Activated naive CD4-positive, alpha-beta T cell treated with anti-CD3 and anti-CD28 coated beads for 36 hours (primary cell): ENCODE measurements at regions of chr19 and their contacts with region 1.

Region 1: GRCh38 chr19:3984908-3985642 is at the start of gene EEF2:
- DNase-seq: peak; percentile 88
- H3K4me3 Mint-ChIP-seq: peak within 1 kb of the TSS; percentile 91
- H3K27ac Mint-ChIP-seq: peak within 1 kb of the TSS; percentile 94
- H3K4me1 Mint-ChIP-seq: peaks cover 52% of the 10 kb centered on the region
- H3K27me3 Mint-ChIP-seq: no peaks in the 10 kb centered on the region
- total RNA-seq, gene EEF2: 3,747 to 3,914 TPM

Region 2: DNA sequence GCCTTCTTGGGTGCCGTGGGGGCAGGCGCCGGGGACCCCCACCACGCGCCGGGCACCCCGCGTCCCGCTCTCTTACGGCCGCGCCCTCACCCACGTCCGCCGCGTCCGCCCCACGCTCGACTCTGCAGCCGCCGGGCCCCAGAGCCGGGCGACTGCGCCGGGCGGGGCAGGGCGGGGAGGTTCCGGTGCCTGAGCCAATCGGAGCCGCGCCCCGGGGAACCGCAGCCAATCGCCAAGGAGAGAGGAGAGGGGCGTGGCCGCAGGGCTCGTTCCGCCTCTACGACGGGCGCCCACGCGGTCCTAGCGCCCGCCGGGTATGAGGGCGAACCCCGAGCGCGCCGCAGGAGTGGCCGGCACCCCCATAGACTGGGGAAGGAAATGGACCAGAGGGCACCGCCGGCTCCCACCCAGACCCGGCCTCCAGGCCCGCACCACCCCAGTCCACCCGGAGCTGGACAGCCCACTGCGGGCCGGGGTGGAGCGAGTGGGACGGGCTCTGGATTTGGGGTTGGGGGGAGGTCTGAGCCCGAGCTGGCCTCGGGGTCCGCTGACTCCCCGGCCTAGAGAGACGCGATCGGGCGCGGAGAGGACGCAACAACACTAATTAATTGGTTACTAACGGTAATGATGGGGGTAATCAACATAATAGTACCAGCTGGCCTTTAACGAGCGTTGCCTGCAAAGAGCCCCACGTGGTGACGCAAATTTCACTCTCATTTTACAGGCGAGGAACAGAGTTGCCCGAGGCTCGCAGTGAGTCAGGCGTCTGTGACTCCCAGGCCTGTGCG is 427.4 kb before region 1 on chr19 and contains the start of gene MFSD12:
- CTCF ChIA-PET with region 1: no interaction called
- intact Hi-C with region 1: loop called (anchors 5 kb)
- DNase-seq: peak; percentile 94
- H3K4me3 Mint-ChIP-seq: peak within 1 kb of the TSS; percentile 96
- H3K27ac Mint-ChIP-seq: peak within 1 kb of the TSS; percentile 81
- H3K4me1 Mint-ChIP-seq: peaks cover 37% of the 10 kb centered on the region
- H3K27me3 Mint-ChIP-seq: no peaks in the 10 kb centered on the region
- total RNA-seq, gene MFSD12: 31.3 to 34.0 TPM

Region 3: GRCh38 chr19:4007021-4007835 is 22.2 kb after region 1 on chr19 and contains the start of gene PIAS4:
- CTCF ChIA-PET with region 1: interaction called, 18 read pairs
- intact Hi-C with region 1: loop called (anchors 1 kb)
- DNase-seq: peak; percentile 96
- H3K4me3 Mint-ChIP-seq: peak within 1 kb of the TSS; percentile 84
- H3K27ac Mint-ChIP-seq: peak within 1 kb of the TSS; percentile 79
- H3K4me1 Mint-ChIP-seq: peaks cover 31% of the 10 kb centered on the region
- H3K27me3 Mint-ChIP-seq: no peaks in the 10 kb centered on the region
- total RNA-seq, gene PIAS4: 16.1 to 20.1 TPM

Region 4: DNA sequence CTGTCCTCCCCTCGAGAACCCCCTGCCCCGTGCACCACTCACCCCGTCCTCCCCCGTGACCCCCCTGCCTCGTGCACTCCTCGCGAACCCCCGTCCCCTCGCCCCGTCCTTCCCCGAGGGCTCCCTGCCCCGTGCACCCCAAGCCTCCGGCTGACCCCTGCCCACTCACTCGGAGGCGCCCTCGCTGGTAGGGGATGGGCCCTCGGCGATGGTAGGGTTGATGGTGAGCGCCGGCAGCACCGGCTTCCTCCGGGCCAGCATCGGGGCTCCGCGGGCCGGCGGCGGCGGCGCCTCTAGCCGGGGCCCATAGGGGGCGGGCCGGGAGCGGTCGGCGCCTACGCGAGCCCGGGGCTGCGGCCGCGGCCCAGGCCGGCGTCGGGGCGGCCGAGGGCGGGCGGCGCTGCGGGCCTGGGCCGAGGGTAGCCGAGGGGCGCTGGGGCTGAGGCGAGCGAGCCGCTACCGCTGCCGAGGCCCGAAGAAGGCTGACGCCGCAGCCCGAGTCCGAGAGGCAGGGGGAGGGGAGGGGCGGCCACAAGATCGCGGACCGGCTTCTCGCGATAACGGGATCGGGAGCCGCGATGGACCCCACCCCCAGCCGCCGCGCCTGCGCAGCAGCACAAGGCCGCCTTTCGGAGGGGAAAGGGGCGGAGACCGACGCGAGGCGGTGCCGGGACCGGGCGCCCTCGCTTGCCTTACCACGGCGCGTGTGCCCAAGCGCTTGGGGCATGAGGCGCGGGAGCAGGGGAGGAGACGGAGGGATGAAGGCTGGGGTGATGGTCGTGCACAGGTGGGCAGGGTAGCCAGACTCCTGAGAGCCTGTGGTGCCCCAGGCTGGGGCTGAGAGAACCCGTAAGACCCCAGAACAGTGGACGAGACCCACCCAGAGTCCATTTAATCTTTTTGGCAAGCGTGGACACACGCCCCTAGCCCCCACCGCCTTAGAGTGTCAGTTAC is 138.8 kb after region 1 on chr19 and contains the start of gene MAP2K2:
- CTCF ChIA-PET with region 1: no interaction called
- intact Hi-C with region 1: loop called (anchors 5 kb)
- DNase-seq: peak; percentile 96
- H3K4me3 Mint-ChIP-seq: peak within 1 kb of the TSS; percentile 85
- H3K27ac Mint-ChIP-seq: peak within 1 kb of the TSS; percentile 84
- H3K4me1 Mint-ChIP-seq: peaks cover 24% of the 10 kb centered on the region
- H3K27me3 Mint-ChIP-seq: no peaks in the 10 kb centered on the region
- total RNA-seq, gene MAP2K2: 101 to 103 TPM

Region 5: DNA sequence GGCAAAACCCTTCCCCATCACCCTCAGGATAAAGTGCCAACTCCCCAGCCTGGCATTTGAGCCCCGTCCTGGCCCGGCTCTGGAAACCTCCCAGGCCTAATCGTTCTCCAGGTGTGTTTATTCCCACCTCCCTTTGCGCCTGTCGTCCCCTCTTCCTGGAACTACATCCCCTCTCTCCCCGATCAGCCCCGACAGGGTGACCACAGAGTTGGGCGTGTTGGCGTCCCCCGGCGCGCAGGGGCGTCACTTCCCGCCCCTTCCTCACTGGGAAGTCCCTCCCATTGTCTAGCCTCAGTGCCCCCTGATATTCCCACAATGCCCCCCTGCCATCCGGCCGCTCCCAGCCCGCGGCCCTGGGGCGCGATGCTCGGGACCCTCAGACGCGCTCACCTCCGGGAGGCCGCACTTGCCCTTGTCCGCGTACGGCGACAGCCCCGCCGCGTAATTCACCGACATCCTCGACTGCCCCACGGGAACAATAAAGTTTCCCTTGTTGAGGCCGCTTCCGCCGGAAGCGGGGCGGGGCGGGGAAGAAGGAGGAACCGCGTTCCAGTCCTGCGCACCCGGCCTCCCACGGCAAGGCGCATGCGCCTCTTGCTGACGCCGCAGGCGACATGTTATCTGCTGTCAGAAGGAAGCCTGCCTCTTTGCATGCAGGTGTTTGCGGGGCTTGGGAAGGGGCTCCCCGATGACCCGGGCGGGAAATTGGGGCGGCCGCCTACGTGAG is 197.2 kb after region 1 on chr19 and contains the starts of genes ANKRD24 and SIRT6:
- CTCF ChIA-PET with region 1: no interaction called
- intact Hi-C with region 1: loop called (anchors 1 kb)
- DNase-seq: peak; percentile 97
- H3K4me3 Mint-ChIP-seq: peak within 1 kb of the TSS; percentile 97
- H3K27ac Mint-ChIP-seq: peak within 1 kb of the TSS; percentile 93
- H3K4me1 Mint-ChIP-seq: peaks cover 34% of the 10 kb centered on the region
- H3K27me3 Mint-ChIP-seq: no peaks in the 10 kb centered on the region
- total RNA-seq, gene ANKRD24: 2.5 to 2.6 TPM
- total RNA-seq, gene SIRT6: 20.0 to 20.1 TPM

Region 6: DNA sequence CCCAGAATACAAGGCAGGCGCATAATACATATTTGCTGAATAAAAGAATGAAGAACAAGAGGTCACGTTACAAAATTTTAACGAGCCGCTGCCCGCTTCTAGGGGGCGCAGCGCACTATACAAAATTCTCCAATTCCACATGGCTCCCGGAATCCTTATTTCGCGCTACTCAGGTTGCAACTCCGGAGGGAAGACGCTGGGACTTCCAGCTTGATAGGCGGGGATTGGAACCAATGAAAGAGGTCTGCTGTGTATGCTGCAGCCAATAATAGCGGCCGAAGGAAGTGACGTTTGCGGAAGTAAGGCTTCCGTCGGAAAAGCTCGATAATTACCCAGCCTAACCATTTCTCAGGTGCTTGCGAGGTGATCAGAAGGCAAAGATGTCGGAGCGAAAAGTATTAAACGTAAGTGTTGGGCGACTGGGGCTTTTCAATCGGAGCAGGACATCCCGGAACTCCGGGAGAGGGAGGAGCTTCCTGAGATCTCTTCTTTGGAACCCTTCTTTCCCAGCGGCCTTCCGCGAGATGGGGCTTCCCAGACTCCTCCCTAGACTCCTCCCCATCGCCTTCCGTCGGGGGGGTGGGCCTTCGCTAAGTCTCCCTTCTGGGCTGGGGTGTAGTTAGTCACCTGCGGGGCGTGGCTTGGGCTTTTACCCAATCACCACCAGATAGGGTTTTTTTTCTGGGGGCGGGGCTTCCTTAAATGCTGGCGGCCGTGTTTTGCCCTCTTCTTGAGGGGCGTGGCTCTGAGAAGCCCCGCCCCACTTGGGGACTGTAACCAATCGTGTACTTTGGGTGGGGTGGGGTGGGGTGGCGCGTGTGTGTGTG is 261.9 kb after region 1 on chr19 and contains the start of gene YJU2:
- CTCF ChIA-PET with region 1: no interaction called
- intact Hi-C with region 1: loop called (anchors 5 kb)
- DNase-seq: peak; percentile 100
- H3K4me3 Mint-ChIP-seq: peak within 1 kb of the TSS; percentile 80
- H3K27ac Mint-ChIP-seq: peak within 1 kb of the TSS; percentile 95
- H3K4me1 Mint-ChIP-seq: peaks cover 22% of the 10 kb centered on the region
- H3K27me3 Mint-ChIP-seq: no peaks in the 10 kb centered on the region
- total RNA-seq, gene YJU2: 28.5 to 29.8 TPM